Sciatic nerve (tissue), 2 donors: ENCODE measurements at regions of chr14 and their contacts with region 1.

Region 1: DNA sequence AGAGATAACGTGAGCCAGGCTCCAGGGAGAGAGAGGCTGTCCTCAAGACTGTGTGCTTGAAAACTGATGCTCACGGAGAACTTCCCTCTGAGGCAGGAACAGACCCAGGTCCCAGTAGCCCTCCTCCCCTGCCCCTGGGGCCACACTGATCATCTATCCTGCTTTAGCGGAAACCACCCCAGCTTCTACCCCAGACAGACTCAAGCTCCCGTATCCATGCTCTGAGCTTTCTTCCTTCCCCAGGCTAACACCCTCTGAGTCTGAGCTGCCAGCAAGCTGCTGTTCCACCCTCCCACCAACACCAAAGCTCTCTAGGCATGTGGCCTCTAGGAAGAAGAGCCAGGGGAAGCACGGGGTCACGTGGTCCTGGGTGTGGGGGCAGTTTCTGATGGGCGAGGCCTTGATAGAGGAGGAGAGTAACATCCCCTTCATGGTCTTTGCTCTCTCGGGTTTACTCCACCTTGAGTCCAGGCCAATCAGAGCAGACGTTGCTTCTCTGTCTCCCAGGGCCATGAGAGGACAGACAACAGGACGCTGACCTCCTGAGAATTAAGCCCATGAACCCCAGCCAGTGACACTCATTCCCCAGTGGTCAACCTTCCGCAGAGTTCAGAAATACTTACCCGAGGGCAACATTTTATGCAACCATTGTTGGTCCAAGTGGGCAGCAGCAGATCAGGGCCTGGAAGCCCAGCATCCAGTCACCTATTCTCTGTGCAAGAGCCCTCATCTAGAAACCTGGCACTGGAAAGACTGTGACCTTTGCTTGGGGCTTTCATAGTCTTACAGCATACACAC is 1.4 kb downstream of the PCK2 start:
- DNase-seq: no peak
- ATAC-seq: peak; percentile 19

Region 2: DNA sequence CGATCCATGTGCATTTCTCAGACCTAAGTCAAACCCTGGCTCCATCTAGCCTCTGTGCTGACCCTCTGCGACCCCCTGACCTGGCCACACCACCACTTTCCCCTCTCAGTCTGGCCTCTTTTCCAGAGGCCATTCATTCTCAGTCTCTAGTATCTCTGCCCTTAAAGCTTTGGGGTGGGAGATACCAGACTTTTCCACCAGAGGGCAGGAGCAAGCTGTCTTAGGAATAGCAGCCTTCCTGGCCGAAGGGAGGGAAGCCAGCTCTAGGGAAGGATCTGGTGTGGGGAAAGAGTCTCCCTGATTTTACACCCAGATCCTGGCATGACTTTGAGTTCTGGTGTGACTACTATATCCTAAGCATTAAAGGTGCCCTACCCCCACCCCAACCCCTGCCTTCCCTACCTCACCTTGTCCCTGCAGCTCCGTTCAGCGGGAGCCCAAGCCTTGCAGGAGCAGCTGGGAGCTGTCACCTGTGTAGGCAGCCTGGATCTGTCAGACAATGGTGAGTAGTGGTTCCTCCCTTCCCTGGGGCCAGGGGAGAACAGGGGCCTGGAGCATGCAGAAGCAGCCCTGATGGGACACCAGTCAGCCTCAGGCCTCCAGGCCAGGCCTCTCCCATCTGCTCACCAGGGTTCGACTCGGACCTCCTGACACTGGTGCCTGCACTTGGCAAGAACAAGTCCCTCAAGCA is 37.1 kb before region 1 on chr14:
- intact Hi-C with region 1: loop called (anchors 5 kb)
- DNase-seq: peak; percentile 92
- ATAC-seq: peak; percentile 73